Right lobe of liver (tissue), 6 donors: ENCODE measurements at regions of chr2 and their contacts with region 1.

Region 1: GRCh38 chr2:73828818-73829570 is at the start of gene STAMBP:
- DNase-seq: peak; percentile 96 to 97 (median 96)
- ATAC-seq: peak; percentile 99
- H3K4me3 ChIP-seq: peak within 1 kb of the TSS; percentile 73 to 93 (median 81)
- H3K27ac ChIP-seq: peak within 1 kb of the TSS; percentile 81 to 95 (median 83)
- H3K4me1 ChIP-seq: peaks cover 0 to 12% (median 0%) of the 10 kb centered on the region in 4 donors
- H3K27me3 ChIP-seq: no peaks in the 10 kb centered on the region
- CTCF ChIP-seq: no peak
- POLR2A ChIP-seq: peak; percentile 57
- total RNA-seq, gene STAMBP: 10.9 to 23.9 (median 16.9) TPM

Region 2: GRCh38 chr2:73886357-73886756 is 57.4 kb after region 1 on chr2:
- intact Hi-C with region 1: no loop called
- DNase-seq: no peak
- ATAC-seq: no peak
- H3K4me3 ChIP-seq: no peak overlapping the region
- H3K27ac ChIP-seq: no peak overlapping the region
- H3K4me1 ChIP-seq: no peaks in the 10 kb centered on the region
- H3K27me3 ChIP-seq: no peaks in the 10 kb centered on the region
- CTCF ChIP-seq: no peak
- POLR2A ChIP-seq: no peak

Region 3: GRCh38 chr2:74147727-74148456 is 318.9 kb after region 1 on chr2 and contains the start of gene BOLA3:
- intact Hi-C with region 1: loop called in 1 of 2 experiments (anchors 10 kb)
- DNase-seq: peak; percentile 84 to 88 (median 88)
- ATAC-seq: peak; percentile 98 to 99 (median 98)
- H3K4me3 ChIP-seq: peak within 1 kb of the TSS; percentile 71 to 94 (median 81)
- H3K27ac ChIP-seq: peak within 1 kb of the TSS in 2 of 3 donors; percentile 34 to 48
- H3K4me1 ChIP-seq: peaks cover 0 to 7% (median 3%) of the 10 kb centered on the region in 4 donors
- H3K27me3 ChIP-seq: no peaks in the 10 kb centered on the region
- CTCF ChIP-seq: peak; percentile 58 to 90 (median 81)
- POLR2A ChIP-seq: peak; percentile 58
- total RNA-seq, gene BOLA3: 14.6 to 58.6 (median 16.0) TPM

Region 4: GRCh38 chr2:74334931-74335333 is 505.9 kb after region 1 on chr2:
- intact Hi-C with region 1: loop called in 1 of 2 experiments (anchors 10 kb)
- DNase-seq: peak; percentile 71 to 79 (median 76)
- ATAC-seq: peak; percentile 93 to 96 (median 94)
- H3K4me3 ChIP-seq: no peak overlapping the region
- H3K27ac ChIP-seq: no peak overlapping the region
- H3K4me1 ChIP-seq: no peaks in the 10 kb centered on the region
- H3K27me3 ChIP-seq: no peaks in the 10 kb centered on the region
- CTCF ChIP-seq: peak; percentile 67 to 97 (median 96)
- POLR2A ChIP-seq: no peak